ENCODE measurements at regions of chr14 and their contacts with region 1.

Region 1: DNA sequence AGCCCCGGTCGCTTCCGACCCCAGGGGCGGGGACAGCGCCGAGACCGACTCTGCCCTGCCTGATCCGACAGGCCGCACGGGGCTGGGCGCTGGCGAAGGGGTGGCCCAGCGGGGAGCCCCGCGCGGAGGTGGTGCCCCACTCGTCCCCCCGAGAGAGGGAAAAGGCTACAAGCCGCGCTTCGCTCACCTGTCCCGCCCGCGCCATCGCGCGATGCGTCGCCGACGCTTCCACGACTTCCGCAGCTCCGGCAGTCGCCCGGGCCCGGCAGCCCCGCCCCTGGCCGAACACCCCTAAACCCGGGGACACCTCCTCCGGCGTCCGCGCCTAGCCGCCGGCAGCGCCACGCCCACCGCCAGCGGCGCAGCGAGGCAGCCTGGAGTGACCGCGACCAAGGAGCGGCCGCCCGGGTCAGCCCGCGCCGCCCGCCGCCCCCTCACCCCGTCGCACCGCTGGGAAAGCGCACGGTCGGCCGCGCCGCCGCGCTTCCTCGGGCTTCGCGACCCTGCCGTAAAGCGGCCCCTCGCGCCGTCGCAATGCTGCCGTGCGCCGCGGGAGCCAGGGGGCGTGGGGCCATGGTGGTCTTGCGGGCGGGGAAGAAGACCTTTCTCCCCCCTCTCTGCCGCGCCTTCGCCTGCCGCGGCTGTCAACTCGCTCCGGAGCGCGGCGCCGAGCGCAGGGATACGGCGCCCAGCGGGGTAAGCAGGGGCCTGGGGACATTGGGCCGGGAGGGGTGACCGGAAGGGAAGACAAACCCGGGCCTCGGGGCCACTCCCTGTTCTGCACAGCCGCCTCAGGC is at the starts of genes BAG5 and COA8:
- DNase-seq: peak; percentile 86 to 98
- H3K4me3 ChIP-seq: peak within 1 kb of the TSS; percentile 87
- H3K27ac ChIP-seq: peak within 1 kb of the TSS; percentile 76
- H3K4me1 ChIP-seq: peaks cover 49% of the 10 kb centered on the region
- H3K27me3 ChIP-seq: no peaks in the 10 kb centered on the region
- CTCF ChIP-seq: peak; percentile 31; the same call in 1 of the 2 replicates
- total RNA-seq, gene BAG5: 61.5 and 76.5 TPM in 2 replicates
- total RNA-seq, gene COA8: 93.8 and 101 TPM in 2 replicates

Region 2: DNA sequence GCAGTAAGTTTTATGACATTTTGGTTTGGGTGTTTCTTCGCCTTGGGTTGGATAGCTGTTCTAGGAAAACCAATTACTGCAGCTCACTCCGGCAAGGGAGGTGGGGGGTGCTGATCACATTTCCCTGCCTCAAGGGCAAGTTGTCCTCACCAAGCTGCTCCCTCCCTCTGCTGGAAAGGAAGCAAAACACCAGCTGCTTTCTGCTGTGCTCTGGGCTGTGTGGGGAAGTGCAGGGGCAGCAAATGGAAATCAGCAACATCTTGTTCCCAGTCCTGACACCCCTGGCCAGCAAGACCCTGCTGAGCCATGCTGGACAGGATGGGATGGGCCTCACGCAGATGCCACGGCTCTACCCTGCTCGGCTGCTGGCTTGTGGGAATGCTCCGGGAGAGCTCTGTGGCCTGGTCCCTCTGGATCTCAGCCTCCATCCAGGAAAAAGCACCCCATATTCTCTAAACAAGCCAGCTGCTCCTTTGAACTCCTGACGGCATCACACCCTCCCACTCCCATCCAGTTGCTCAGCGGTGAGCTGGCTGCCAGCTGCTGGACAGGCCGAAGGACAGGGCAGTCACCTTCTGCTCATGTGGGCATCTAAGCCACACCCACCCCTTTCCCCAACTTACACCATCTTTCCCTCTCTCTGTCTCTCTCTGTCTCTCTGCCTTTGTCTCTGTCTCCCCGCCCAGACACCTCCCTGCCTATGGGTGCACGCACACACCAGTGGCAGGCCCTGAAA is 281.0 kb before region 1 on chr14:
- CTCF ChIA-PET with region 1: no interaction called
- POLR2A ChIA-PET with region 1: interaction called, 16 read pairs
- intact Hi-C with region 1: no loop called
- DNase-seq: peak; percentile 64 to 77
- H3K4me3 ChIP-seq: no peak overlapping the region
- H3K27ac ChIP-seq: no peak overlapping the region
- H3K4me1 ChIP-seq: peaks cover 49% of the 10 kb centered on the region
- H3K27me3 ChIP-seq: no peaks in the 10 kb centered on the region
- CTCF ChIP-seq: peak; percentile 82

Region 3: GRCh38 chr14:103540821-103541708 is 21.6 kb before region 1 on chr14:
- CTCF ChIA-PET with region 1: no interaction called
- POLR2A ChIA-PET with region 1: interaction called, 6 read pairs
- intact Hi-C with region 1: loop called (anchors 1 kb)
- DNase-seq: no peak
- H3K4me3 ChIP-seq: no peak overlapping the region; the same call in 1 of the 2 replicates
- H3K27ac ChIP-seq: peak overlapping the region; percentile 96
- H3K4me1 ChIP-seq: peaks cover 58% of the 10 kb centered on the region
- H3K27me3 ChIP-seq: no peaks in the 10 kb centered on the region
- CTCF ChIP-seq: no peak; the same call in 1 of the 2 replicates

Region 4: DNA sequence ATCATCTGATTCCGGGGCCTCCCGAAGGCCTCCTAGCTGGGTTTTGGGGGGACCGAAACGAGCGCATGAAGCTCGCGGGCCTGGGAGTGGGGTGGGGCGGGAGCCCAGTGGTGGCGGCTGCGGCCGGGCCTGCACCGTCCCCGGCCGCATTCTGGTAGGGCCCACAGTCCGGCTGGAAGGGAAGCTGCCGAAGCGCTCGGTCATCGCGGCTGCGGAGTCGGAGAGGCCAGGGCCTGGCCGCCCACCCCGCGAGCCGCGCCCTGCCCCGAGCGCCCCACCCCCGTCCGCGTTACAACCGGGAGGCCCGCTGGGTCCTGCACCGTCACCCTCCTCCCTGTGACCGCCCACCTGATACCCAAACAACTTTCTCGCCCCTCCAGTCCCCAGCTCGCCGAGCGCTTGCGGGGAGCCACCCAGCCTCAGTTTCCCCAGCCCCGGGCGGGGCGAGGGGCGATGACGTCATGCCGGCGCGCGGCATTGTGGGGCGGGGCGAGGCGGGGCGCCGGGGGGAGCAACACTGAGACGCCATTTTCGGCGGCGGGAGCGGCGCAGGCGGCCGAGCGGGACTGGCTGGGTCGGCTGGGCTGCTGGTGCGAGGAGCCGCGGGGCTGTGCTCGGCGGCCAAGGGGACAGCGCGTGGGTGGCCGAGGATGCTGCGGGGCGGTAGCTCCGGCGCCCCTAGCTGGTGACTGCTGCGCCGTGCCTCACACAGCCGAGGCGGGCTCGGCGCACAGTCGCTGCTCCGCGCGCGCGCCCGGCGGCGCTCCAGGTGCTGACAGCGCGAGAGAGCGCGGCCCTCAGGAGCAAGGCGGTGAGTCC is 66.3 kb after region 1 on chr14 and contains the start of gene KLC1:
- CTCF ChIA-PET with region 1: interaction called, 12 read pairs
- POLR2A ChIA-PET with region 1: interaction called, 10 read pairs
- intact Hi-C with region 1: no loop called
- DNase-seq: peak; percentile 57 to 90
- H3K4me3 ChIP-seq: peak within 1 kb of the TSS; percentile 81
- H3K27ac ChIP-seq: peak within 1 kb of the TSS; percentile 92
- H3K4me1 ChIP-seq: peaks cover 50% of the 10 kb centered on the region
- H3K27me3 ChIP-seq: no peaks in the 10 kb centered on the region
- CTCF ChIP-seq: no peak
- total RNA-seq, gene KLC1: 254 and 331 TPM in 2 replicates

Region 5: DNA sequence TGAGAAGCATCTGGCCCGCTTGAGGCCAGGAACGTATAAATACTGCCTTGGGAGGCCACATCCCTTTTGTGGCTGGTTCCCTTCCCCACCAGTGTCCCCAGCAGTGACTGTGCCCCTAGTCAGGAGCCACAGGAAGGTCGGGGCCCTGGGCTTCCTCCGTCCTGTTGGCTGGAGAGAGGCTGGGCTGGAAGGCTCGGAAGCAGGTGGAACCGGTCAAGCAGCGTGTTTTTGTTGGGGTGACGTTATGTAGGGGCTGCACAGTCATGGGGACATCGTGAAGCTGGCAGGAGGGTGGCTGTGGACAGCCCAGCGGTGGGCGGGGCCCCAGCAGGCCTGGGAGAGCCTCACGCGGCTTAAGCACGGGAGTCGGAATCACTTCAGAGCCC is 142.5 kb after region 1 on chr14:
- CTCF ChIA-PET with region 1: no interaction called
- POLR2A ChIA-PET with region 1: no interaction called
- intact Hi-C with region 1: loop called (anchors 5 kb)
- DNase-seq: peak; percentile 99 to 100
- H3K4me3 ChIP-seq: no peak overlapping the region; the same call in 1 of the 2 replicates
- H3K27ac ChIP-seq: peak overlapping the region; percentile 44
- H3K4me1 ChIP-seq: peaks cover 19% of the 10 kb centered on the region
- H3K27me3 ChIP-seq: no peaks in the 10 kb centered on the region
- CTCF ChIP-seq: no peak